MCF 10A (cell line): ENCODE measurements at regions of chr17 and their contacts with region 1.

Region 1: DNA sequence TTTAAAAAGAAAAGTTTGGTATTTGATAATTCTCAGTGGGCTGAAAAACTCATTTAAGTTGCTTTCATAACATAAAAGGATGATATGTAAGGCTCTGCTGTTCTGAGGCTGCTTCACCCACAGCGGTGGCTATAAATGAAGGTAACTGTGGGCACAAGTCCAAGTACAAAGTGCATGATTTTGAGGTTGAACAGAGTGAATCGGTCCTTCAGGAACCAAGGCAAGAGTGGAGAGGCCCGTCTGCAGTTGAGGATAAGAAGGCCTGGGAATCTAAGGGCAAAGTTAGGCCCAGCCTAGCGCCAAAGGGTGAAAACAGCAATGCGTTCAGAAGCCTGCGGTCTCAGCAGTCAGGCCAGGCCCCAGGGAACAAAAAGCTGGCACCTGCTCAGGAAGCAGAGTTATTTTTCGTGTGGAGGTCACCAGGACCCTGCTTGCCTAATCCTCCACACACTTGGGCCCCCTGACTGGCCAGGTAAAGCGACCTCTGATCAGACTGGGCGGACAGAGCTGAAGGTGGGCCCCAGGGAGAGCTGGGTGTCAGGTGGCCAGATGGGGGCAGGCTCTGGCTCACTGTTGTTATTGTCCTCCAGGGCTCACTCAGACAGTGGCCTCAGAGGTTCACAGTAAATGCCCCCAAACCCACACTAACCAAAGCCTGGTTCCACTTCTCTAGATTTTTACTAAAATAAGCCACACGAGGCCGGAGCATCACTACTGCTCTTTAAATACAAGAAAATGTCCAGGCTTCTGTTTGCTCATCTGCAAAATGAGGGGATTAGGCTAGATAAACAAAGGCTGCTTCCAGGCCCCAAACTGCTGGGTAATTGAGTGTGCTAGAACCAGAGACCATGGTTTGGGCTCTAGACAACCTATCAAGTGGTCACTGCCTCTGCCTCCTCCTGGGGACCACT is 46.5 kb downstream of the TEX2 start:
- DNase-seq: peak; percentile 43
- H3K4me3 Mint-ChIP-seq: no peak overlapping the region
- H3K27ac Mint-ChIP-seq: peak overlapping the region; percentile 89
- H3K4me1 Mint-ChIP-seq: peaks cover 38% of the 10 kb centered on the region
- H3K27me3 Mint-ChIP-seq: no peaks in the 10 kb centered on the region
- CTCF ChIP-seq: no peak

Region 2: DNA sequence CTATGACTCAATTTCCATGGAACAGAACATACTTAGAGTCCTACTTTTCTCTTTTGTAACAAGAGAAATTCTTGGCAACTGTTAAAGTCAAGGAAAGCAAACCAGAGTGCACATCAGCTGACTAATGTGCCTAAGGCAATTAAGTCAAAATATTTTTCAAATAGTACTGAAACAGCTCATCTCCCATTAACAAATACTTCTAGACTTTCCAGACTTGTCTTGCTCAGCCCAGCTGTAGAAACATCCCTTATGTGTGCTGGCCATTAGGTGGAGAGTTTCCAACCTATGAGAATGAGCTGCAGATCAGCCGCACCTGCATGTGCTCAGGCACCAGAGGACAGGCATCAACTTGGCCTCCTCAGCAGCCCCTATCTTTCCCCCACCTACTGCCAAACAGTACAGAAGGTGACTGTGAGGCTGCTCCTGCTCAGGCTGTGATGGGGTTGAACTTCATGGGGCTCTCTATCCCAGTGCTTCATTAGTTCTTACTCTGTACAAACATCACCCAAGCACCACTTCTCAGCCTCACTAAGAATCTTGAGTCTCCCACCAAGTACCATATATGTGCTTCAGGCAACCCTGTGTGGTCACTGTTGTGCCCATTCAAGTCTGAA is 14.3 kb after region 1 on chr17:
- CTCF ChIA-PET with region 1: interaction called, 3 read pairs
- POLR2A ChIA-PET with region 1: interaction called, 187 read pairs
- intact Hi-C with region 1: no loop called
- DNase-seq: peak; percentile 90
- H3K4me3 Mint-ChIP-seq: peak overlapping the region; percentile 29
- H3K27ac Mint-ChIP-seq: peak overlapping the region; percentile 91
- H3K4me1 Mint-ChIP-seq: peaks cover 32% of the 10 kb centered on the region
- H3K27me3 Mint-ChIP-seq: no peaks in the 10 kb centered on the region
- CTCF ChIP-seq: no peak